ENCODE measurements at regions of chr6 and their contacts with region 1.

Region 1: DNA sequence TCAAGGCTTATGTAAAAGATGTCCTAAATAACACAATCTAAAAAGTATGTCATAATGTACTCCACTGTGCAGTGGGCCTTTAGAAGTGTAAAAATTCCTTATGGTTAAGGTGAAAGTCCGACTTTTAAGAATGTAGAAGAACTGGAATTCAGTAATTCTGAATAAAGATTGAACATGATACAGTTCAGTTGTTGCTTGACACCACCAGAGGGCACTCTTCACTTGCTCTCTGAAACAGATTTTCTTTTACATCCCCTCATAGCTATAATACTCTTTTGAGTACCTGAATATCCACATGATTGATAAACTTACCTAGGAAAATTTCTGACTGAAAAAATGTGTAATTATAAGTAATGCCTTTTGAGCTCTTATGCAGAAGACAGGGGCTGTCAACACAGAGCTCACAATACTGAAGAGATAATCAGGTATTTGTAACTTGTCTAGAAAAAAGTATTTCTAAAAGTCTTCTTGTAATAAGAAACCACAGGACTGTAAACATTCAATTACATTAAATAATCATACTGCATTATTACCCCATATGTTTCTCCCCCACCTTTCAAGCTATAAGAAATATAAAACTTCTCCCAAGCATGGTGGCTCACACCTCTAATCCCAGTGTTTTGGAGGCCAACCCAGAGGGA is 92.1 kb downstream of the POPDC3 start:
- DNase-seq: no peak
- H3K4me3 ChIP-seq: no peak overlapping the region
- H3K27ac ChIP-seq: no peak overlapping the region
- H3K4me1 ChIP-seq: no peaks in the 10 kb centered on the region
- H3K27me3 ChIP-seq: no peaks in the 10 kb centered on the region
- CTCF ChIP-seq: peak; percentile 62 to 77

Region 2: GRCh38 chr6:105402939-105403935 is 315.5 kb after region 1 on chr6 and contains the start of gene PREP:
- intact Hi-C with region 1: loop called (anchors 5 kb)
- DNase-seq: peak; percentile 72 to 90
- H3K4me3 ChIP-seq: peak within 1 kb of the TSS; percentile 82 to 90
- H3K27ac ChIP-seq: peak within 1 kb of the TSS; percentile 77 to 84
- H3K4me1 ChIP-seq: peaks cover 0 to 30% (median 15%) of the 10 kb centered on the region in 4 donors
- H3K27me3 ChIP-seq: no peaks in the 10 kb centered on the region
- CTCF ChIP-seq: peak; percentile 66 to 71